ENCODE measurements at regions of chr3 and their contacts with region 1.

Region 1: GRCh38 chr3:4493014-4493940 is at the start of gene ITPR1:
- DNase-seq: peak; percentile 92
- ATAC-seq: peak; percentile 88
- H3K4me3 Mint-ChIP-seq: peak within 1 kb of the TSS; percentile 93
- H3K27ac Mint-ChIP-seq: peak within 1 kb of the TSS; percentile 92
- H3K4me1 Mint-ChIP-seq: peaks cover 49% of the 10 kb centered on the region
- H3K27me3 Mint-ChIP-seq: no peaks in the 10 kb centered on the region
- CTCF ChIP-seq: no peak
- total RNA-seq, gene ITPR1: 116 and 143 TPM in 2 replicates

Region 2: DNA sequence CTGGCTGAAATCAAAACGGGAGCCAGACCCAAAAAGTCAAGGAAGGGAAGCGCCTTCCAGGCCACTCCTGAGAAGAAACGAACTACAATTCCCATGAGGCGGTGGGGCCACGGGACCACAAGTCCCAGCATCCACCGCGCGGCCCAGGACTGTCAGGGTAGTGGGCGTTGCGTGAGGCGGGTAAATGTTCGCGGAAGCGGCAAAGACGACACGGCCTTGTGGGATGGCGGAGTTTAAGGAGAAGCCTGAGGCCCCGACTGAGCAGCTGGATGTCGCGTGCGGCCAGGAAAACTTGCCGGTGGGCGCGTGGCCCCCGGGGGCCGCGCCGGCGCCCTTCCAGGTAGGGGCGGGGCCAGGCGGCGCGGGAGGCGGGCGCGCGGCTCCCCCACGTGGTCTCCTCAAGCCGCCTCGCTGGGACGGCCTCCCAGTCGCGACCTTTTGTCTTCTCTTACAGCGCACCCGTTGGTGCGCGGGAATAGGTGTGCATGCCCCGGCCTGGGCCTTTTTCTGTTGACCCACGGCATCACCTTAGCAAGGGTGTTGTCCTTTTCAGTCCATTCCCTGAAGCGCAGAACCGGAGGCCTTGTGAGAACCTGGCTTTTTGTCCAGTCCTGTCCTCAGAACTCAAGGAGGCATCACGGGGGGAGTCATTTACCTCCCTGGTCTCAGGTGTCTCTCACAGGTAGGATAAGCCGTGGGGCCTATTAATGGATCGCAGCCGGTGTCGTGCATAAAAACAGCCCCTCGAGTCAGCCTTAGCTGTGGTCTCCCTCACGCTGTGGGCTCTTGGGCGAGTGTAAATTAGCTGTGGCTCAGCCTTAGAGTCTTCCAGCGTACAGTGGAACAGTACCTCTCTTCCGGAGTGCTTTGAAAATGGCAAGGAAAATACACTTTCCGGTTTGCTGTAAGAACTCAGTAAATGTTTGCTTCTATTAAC is 189.8 kb before region 1 on chr3 and contains the start of gene SETMAR:
- CTCF ChIA-PET with region 1: no interaction called
- POLR2A ChIA-PET with region 1: no interaction called
- intact Hi-C with region 1: loop called (anchors 1 kb)
- DNase-seq: peak; percentile 77
- ATAC-seq: peak; percentile 96
- H3K4me3 Mint-ChIP-seq: peak within 1 kb of the TSS; percentile 98
- H3K27ac Mint-ChIP-seq: peak within 1 kb of the TSS; percentile 98
- H3K4me1 Mint-ChIP-seq: peaks cover 11% of the 10 kb centered on the region
- H3K27me3 Mint-ChIP-seq: no peaks in the 10 kb centered on the region
- CTCF ChIP-seq: no peak
- total RNA-seq, gene SETMAR: 10.3 and 11.4 TPM in 2 replicates

Region 3: DNA sequence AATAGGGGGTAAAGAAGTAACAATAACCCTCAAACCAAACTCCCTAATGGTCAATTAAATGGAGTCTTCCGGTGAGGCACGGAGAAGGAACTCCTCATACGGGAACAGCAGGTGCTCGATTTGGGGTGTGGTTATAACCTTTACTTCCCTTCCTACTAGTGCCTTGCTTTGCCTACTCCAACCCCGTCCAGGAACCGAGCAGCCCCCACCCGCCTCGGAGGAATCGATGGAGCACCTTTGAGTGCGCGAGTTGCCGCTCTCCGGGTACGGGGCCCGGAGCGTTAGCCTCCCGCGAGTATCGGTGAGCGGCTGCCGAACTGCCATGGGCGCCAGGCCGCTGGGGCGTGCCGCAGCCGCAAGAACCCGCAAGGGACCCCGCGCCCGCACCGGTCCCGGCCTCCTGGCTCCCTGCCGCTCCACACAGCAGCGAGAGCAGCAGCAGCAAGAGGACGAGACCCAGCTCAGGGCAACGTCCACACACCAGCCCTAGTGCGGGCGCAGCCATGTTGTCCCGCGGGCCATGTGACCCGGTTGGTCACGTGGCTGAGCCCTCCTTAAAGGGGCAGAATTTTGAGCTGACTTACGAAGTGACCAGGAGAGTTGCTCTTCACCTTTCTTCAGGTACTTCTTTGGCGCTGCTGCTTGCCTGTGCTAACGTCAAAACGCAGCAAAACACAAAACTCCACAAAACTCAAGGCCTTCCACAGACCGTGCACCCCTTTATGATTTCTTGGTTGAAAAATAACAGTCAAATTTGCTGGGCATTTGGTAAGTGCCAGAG is 26.3 kb before region 1 on chr3 and contains the start of gene SUMF1:
- CTCF ChIA-PET with region 1: no interaction called
- POLR2A ChIA-PET with region 1: interaction called, 88 read pairs
- intact Hi-C with region 1: loop called (anchors 1 kb)
- DNase-seq: peak; percentile 70
- ATAC-seq: peak; percentile 94
- H3K4me3 Mint-ChIP-seq: peak within 1 kb of the TSS; percentile 93
- H3K27ac Mint-ChIP-seq: peak within 1 kb of the TSS; percentile 96
- H3K4me1 Mint-ChIP-seq: peaks cover 16% of the 10 kb centered on the region
- H3K27me3 Mint-ChIP-seq: no peaks in the 10 kb centered on the region
- CTCF ChIP-seq: no peak
- total RNA-seq, gene SUMF1: 18.4 and 20.7 TPM in 2 replicates

Region 4: GRCh38 chr3:4512895-4513616 is 19.8 kb after region 1 on chr3:
- CTCF ChIA-PET with region 1: interaction called, 14 read pairs
- POLR2A ChIA-PET with region 1: interaction called, 288 read pairs
- intact Hi-C with region 1: loop called (anchors 1 kb)
- DNase-seq: no peak
- ATAC-seq: peak; percentile 13
- H3K4me3 Mint-ChIP-seq: no peak overlapping the region
- H3K27ac Mint-ChIP-seq: peak overlapping the region; percentile 67
- H3K4me1 Mint-ChIP-seq: peaks cover 96% of the 10 kb centered on the region
- H3K27me3 Mint-ChIP-seq: no peaks in the 10 kb centered on the region
- CTCF ChIP-seq: no peak

Region 5: GRCh38 chr3:4633078-4634004 is 140.1 kb after region 1 on chr3:
- CTCF ChIA-PET with region 1: interaction called, 7 read pairs
- POLR2A ChIA-PET with region 1: interaction called, 8 read pairs
- intact Hi-C with region 1: loop called (anchors 1 kb)
- DNase-seq: no peak
- ATAC-seq: peak; percentile 60
- H3K4me3 Mint-ChIP-seq: no peak overlapping the region
- H3K27ac Mint-ChIP-seq: peak overlapping the region; percentile 64
- H3K4me1 Mint-ChIP-seq: peaks cover 9% of the 10 kb centered on the region
- H3K27me3 Mint-ChIP-seq: no peaks in the 10 kb centered on the region
- CTCF ChIP-seq: peak; percentile 19

Region 6: GRCh38 chr3:5122030-5122740 is 628.9 kb after region 1 on chr3 and contains the start of gene ARL8B:
- CTCF ChIA-PET with region 1: no interaction called
- POLR2A ChIA-PET with region 1: no interaction called
- intact Hi-C with region 1: loop called (anchors 1 kb)
- DNase-seq: peak; percentile 93
- ATAC-seq: peak; percentile 95
- H3K4me3 Mint-ChIP-seq: peak within 1 kb of the TSS; percentile 94
- H3K27ac Mint-ChIP-seq: peak within 1 kb of the TSS; percentile 91
- H3K4me1 Mint-ChIP-seq: peaks cover 43% of the 10 kb centered on the region
- H3K27me3 Mint-ChIP-seq: no peaks in the 10 kb centered on the region
- CTCF ChIP-seq: peak; percentile 82
- total RNA-seq, gene ARL8B: 57.9 and 62.6 TPM in 2 replicates

Measured in activated B cell treated with CpG ODN at 0.5 μM for 24 hours (primary cell).